ENCODE measurements at regions of chr4 and their contacts with region 1.

Region 1: GRCh38 chr4:56977321-56978012 is at the start of gene NOA1:
- DNase-seq: peak; percentile 98
- ATAC-seq: peak; percentile 90
- total RNA-seq, gene NOA1: 11.5 TPM

Region 2: DNA sequence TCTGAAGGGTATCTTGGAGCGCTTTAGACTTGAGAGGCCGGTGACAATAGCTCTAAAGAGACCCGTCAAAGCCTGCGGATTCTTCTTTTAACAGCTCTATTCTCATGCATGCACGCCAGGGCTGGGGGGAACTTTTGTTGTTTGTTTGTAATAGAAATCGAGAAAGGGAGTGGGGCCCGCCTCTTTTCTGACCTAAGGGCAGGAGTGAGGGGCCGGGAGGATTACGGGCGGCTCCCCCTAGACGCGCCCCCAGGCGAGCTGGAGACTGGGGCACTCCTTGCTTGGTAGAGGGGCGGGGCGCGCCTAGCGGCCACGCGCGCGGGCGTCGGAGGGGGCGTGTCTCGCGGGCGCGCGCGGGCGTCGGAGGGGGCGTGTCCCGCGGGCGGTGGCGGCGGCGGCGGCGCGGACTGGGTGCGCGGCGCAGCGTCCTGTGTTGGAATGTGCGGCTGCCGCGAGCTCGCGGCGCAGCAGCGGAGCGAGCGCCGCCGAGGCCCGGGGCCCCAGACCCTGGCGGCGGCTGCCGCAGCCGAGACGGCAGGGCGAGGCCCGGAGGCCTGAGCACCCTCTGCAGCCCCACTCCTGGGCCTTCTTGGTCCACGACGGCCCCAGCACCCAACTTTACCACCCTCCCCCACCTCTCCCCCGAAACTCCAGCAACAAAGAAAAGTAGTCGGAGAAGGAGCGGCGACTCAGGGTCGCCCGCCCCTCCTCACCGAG is 69.8 kb before region 1 on chr4 and contains the start of gene REST:
- intact Hi-C with region 1: loop called (anchors 1 kb)
- DNase-seq: peak; percentile 91
- ATAC-seq: peak; percentile 83
- total RNA-seq, gene REST: 25.0 TPM

Region 3: GRCh38 chr4:56995525-56995924 is 18.1 kb after region 1 on chr4:
- intact Hi-C with region 1: no loop called
- DNase-seq: peak; percentile 76
- ATAC-seq: peak; percentile 96

Region 4: DNA sequence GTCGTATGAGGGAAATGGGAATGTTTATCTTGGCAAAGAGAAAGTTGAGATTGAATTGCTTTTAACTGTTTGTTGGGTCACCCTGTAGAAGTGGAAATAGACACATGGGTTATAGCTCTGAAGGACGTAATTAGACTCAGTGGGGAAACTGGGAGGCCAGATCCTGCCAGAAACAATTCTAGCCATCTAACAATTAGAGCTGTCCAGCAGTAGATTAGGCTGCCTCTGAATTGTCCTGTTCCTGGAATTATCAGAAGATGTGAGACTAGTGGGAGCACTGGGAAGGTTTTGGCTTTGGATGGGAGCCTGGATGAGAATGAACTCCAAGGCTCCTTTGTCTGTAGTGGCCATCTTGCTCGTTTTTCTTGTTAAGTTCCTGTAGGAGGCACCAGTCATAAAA is 194.6 kb after region 1 on chr4:
- intact Hi-C with region 1: no loop called
- DNase-seq: no peak
- ATAC-seq: no peak